ENCODE measurements at regions of chr2 and their contacts with region 1.

Region 1: GRCh38 chr2:73163483-73164367 is 38.6 kb upstream of the NOTO start:
- DNase-seq: peak in 4 of 5 donors; percentile 80 to 85 (median 84)
- H3K4me3 ChIP-seq: no peak overlapping the region
- H3K27ac ChIP-seq: peak overlapping the region; percentile 25 to 47
- H3K4me1 ChIP-seq: no peaks in the 10 kb centered on the region
- H3K27me3 ChIP-seq: no peaks in the 10 kb centered on the region
- CTCF ChIP-seq: peak; percentile 88

Region 2: DNA sequence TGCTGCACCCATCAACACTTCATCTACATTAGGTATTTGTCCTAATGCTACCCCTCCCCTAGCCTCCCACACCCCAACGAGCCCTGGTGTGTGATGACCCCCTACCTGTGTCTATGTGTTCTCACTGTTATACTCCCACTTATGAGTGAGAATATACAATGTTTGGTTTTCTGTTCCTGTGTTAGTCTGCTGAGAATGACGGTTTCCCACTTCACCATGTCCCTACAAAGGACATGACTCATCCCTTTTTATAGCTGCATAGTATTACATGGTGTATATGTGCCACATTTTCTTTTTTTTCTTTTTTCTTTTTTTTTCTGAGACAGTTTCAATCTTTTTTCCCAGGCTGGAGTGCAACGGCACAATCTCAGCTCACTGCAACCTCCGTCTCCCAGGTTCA is 732.0 kb before region 1 on chr2:
- intact Hi-C with region 1: no loop called
- DNase-seq: no peak
- H3K4me3 ChIP-seq: no peak overlapping the region
- H3K27ac ChIP-seq: no peak overlapping the region
- H3K4me1 ChIP-seq: no peaks in the 10 kb centered on the region
- H3K27me3 ChIP-seq: no peaks in the 10 kb centered on the region
- CTCF ChIP-seq: no peak

Region 3: GRCh38 chr2:72837171-72837570 is 326.6 kb before region 1 on chr2:
- intact Hi-C with region 1: no loop called
- DNase-seq: no peak
- H3K4me3 ChIP-seq: no peak overlapping the region
- H3K27ac ChIP-seq: no peak overlapping the region
- H3K4me1 ChIP-seq: no peaks in the 10 kb centered on the region
- H3K27me3 ChIP-seq: no peaks in the 10 kb centered on the region
- CTCF ChIP-seq: no peak

Region 4: DNA sequence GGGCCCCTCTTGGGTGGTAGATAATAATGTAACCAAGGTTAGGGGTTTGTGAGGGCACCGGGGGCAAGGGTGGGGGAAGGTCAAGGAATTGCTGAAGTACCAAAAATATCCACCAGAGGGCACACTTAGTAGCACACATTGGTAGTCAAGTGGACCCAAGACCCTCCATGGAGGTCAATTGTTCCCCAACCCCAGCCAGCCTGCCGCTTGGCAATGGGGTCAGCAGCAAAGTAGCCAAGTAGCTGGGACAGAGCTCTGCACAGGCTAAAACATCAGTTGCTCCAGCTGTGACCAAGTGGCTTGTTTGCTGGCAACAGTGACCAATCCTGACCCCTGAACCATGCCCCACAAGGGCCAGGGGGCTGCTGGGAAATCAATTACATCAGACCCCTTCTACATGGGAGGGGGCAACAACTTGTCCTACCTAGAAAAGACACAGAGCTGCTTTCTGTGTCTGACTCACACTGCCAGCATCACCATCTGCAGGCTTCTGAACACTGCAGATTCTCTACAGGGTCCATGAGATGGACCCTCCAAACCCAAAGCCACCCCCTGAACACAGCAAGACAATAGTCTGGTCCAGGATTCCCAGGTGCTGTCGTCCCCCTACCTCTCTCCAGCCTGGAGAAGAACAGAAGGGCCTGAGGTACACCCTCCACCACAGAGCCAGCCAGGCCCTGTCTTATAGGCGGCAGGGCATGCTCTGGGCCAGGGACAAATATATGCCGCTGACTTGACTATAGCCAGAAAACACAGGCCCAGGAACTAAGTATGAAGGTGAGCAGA is 170.4 kb before region 1 on chr2:
- intact Hi-C with region 1: loop called (anchors 10 kb)
- DNase-seq: peak in 4 of 5 donors; percentile 21 to 60 (median 40)
- H3K4me3 ChIP-seq: no peak overlapping the region
- H3K27ac ChIP-seq: no peak overlapping the region
- H3K4me1 ChIP-seq: peaks cover 0 to 10% (median 0%) of the 10 kb centered on the region in 3 donors
- H3K27me3 ChIP-seq: no peaks in the 10 kb centered on the region
- CTCF ChIP-seq: peak; percentile 67

Region 5: DNA sequence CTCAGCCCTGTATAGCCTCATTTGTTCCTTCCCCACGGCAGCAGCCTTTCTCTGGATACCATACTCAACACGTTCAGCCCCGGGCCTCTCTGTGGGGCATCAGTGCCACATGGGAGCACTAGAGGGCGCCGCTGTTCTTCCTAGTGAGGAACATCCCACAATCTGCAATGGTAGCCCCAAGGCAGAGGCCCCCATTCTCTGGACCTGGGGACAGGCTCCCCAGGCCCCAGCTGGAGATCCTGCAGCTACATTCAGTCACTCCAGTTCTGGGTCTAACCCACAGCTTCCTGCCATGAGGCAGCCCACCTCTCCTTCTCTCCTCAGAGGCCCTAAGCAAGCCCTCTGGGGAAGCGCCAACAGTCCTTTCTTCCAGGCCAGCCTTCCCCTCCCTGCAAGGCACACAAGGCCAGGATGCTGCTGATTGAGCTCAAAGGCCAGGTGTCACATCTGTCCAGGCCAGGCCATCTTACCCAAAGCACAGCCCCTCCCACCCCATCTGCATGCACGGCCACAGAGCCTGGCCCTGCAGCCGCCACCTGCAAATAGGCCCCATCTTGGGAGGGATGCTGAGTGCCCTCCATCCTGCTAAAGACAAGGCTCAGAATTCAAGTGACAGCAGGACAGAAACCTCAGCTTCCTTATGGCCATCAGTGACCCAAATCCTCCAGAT is 77.9 kb before region 1 on chr2:
- intact Hi-C with region 1: loop called (anchors 5 kb)
- DNase-seq: peak; percentile 85 to 92 (median 87)
- H3K4me3 ChIP-seq: no peak overlapping the region
- H3K27ac ChIP-seq: peak overlapping the region; percentile 37 to 41
- H3K4me1 ChIP-seq: peaks cover 2 to 69% (median 60%) of the 10 kb centered on the region in 3 donors
- H3K27me3 ChIP-seq: no peaks in the 10 kb centered on the region
- CTCF ChIP-seq: peak; percentile 86

Measured in kidney (tissue), 22 donors.